Dorsolateral prefrontal cortex (tissue), 120 donors: ENCODE measurements at regions of chr2 and their contacts with region 1.

Region 1: GRCh38 chr2:195656859-195657633 is at the start of gene SLC39A10:
- DNase-seq: peak; percentile 97 to 99 (median 98)
- H3K4me3 ChIP-seq: peak within 1 kb of the TSS; percentile 64 to 99 (median 88)
- H3K27ac ChIP-seq: peak within 1 kb of the TSS; percentile 92 to 100 (median 99)
- H3K27me3 ChIP-seq: no peaks in the 10 kb centered on the region
- CTCF ChIP-seq: peak in 54 of 56 donors; percentile 23 to 82 (median 56)
- total RNA-seq, gene SLC39A10: 62.6 to 201 (median 128) TPM

Region 2: DNA sequence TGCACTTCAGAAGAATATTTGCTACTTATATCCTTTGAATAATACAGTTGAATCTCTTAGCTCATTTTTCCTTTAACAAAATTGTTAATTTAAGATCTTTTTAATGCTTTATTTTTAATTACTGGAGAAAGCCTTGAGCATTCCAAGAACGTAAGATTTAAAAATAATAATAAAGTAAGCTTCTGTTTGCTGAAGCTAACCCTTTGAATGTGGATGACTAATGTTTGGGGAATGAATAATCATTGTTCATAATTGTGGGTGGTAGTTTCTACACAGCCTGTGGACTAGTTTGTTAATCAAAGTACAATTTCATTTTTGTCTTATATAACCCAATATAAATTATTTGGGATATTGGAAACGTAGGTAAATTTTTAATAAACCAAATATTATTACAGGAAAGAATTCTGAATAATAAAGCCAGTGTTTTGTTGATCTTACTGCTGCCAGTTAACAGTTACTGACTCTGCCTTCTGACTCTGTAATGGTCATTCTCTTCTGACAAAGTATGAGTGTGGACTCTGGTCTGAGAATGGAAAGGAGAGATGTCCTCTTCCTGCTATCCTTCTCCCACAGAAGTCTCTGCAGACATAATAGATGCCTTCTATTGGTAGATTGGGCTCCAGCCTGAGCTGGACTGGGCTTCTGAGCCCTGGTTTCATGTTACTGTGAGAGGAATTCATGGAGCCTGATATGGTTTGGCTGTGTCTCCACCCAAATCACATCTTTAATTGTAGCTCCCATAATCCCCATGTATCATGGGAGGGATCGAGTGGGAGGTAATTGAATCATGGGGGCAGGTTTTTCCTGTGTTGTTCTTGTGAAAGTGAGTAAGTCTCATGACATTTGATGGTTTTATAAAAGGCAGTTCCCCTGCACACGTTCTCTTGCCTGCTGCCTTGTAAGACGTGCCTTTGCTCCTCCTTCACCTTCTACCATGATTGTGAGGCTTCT is 292.8 kb before region 1 on chr2:
- intact Hi-C with region 1: no loop called
- DNase-seq: no peak
- H3K4me3 ChIP-seq: no peak overlapping the region
- H3K27ac ChIP-seq: peak overlapping the region in 44 of 59 donors; percentile 0 to 81 (median 53)
- H3K27me3 ChIP-seq: no peaks in the 10 kb centered on the region
- CTCF ChIP-seq: no peak

Region 3: DNA sequence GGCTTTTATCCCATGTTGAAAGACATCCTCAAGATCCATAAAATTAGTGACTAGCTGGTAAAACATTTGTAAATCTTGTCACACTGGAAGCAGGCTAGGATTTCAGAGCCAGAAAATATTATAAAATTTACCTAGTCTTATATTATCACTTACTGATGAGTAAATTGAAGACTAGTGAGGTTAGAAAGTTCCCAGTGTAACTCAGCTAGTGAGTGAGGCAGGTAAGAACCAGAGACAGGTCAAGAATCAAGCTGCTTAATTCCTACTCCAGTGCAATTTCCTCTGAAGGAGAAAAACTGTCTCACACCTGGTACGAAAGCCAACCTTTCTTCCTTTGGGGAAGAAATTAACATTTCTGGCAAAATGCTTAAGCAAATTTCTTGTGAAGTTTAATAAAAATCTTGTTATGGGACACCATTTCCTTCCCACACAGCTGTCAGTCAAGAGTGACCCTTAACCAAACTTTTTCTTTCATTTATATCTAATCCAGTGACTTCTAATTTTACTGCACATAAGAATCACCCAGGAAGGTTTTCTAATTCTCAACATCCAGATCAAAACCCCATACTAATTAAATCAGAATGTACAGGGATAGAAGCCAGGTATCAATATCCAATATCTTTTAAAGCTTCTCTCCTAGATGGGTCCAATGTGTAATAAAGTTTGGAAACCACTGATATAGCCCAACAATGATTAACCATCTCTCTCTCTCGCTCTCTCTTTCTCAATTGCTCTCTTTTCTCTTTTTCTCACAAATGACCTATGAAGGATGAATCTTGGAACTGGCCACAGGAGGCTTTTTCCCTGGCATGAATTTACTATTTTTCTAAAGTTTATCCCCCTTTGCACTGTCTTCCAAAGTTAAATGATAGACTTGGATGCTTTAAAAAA is 264.4 kb before region 1 on chr2:
- intact Hi-C with region 1: loop called in 1 of 2 experiments (anchors 5 kb)
- DNase-seq: no peak
- H3K4me3 ChIP-seq: no peak overlapping the region
- H3K27ac ChIP-seq: no peak overlapping the region
- H3K27me3 ChIP-seq: no peaks in the 10 kb centered on the region
- CTCF ChIP-seq: no peak

Region 4: GRCh38 chr2:195575879-195576401 is 81.1 kb before region 1 on chr2:
- intact Hi-C with region 1: loop called (anchors 5 kb)
- DNase-seq: no peak
- H3K4me3 ChIP-seq: peak overlapping the region in 24 of 59 donors; percentile 0 to 43 (median 18)
- H3K27ac ChIP-seq: peak overlapping the region in 48 of 59 donors; percentile 8 to 86 (median 65)
- H3K27me3 ChIP-seq: no peaks in the 10 kb centered on the region
- CTCF ChIP-seq: peak in 52 of 56 donors; percentile 25 to 75 (median 49)

Region 5: DNA sequence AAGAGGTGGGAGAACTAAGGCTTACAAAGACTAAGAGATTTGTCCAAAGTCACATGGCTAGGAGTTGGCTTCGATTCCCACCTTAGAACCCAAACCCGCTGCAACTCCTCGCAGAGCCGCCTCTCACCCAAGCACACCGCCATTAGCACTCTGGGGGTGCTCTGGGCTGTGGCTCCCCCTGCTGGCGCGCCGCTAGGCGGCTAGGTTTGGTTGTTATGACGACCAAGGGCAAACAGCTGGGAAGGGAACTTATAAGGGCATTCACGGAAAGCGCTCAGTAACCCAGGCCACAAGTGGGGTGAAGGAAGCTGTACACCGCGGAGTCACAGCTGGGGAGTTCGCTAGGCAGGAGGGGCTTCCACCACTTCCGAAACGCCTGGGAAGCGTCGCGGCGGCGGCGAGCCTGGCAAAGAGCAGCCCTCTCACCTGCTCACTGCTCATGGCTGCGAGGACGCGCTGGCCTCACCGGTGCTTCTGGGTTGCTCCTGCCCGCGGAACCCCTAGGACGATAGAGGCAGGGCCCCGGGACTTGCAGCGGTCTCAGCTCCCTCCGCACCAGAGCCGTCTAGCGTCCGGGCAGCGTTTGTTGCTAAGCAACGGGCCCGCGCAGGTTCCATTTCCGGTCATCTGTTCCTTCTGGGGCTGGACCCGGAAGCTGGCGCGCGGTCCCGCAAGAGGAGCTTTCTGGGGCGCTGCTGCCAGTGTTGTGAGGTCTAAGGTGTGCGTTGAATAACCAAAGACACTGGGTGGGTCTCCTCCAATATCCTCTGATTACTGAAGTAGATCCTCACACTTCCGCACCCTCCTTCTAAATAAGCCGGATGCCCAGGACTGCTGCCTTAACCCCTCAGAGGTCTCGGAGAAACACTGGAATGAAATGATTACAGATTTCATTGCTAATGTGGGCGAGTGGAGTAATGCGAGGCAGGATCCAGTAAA is 411.5 kb after region 1 on chr2 and contains the start of gene DNAH7:
- intact Hi-C with region 1: loop called (anchors 5 kb)
- DNase-seq: peak; percentile 76 to 93 (median 88)
- H3K4me3 ChIP-seq: peak within 1 kb of the TSS; percentile 59 to 96 (median 86)
- H3K27ac ChIP-seq: peak within 1 kb of the TSS in 48 of 59 donors; percentile 2 to 86 (median 60)
- H3K27me3 ChIP-seq: no peaks in the 10 kb centered on the region
- CTCF ChIP-seq: peak in 45 of 56 donors; percentile 6 to 93 (median 68)
- total RNA-seq, gene DNAH7: 4.6 to 43.3 (median 15.6) TPM